GM10248 (cell line): ENCODE measurements at regions of chr13 and their contacts with region 1.

Region 1: GRCh38 chr13:22107548-22107947 is 436.7 kb downstream of the FGF9 start:
- DNase-seq: no peak
- CTCF ChIP-seq: no peak

Region 2: GRCh38 chr13:22121146-22121739 is 13.7 kb after region 1 on chr13:
- CTCF ChIA-PET with region 1: interaction called, 11 read pairs
- POLR2A ChIA-PET with region 1: no interaction called
- DNase-seq: peak; percentile 44
- CTCF ChIP-seq: no peak